ENCODE measurements at regions of chr19 and their contacts with region 1.

Region 1: GRCh38 chr19:2034729-2035589 is 16.1 kb downstream of the MKNK2 start:
- DNase-seq: peak; percentile 99
- ATAC-seq: peak; percentile 91
- H3K4me3 Mint-ChIP-seq: peak overlapping the region; percentile 54
- H3K27ac Mint-ChIP-seq: peak overlapping the region; percentile 96
- H3K4me1 Mint-ChIP-seq: peaks cover 17% of the 10 kb centered on the region
- H3K27me3 Mint-ChIP-seq: peaks cover 2% of the 10 kb centered on the region; the same call in 1 of the 2 replicates
- CTCF ChIP-seq: no peak

Region 2: GRCh38 chr19:1812469-1813196 is 222.3 kb before region 1 on chr19:
- CTCF ChIA-PET with region 1: no interaction called
- POLR2A ChIA-PET with region 1: no interaction called
- DNase-seq: peak; percentile 97
- ATAC-seq: peak; percentile 88
- H3K4me3 Mint-ChIP-seq: peak overlapping the region; percentile 87
- H3K27ac Mint-ChIP-seq: peak overlapping the region; percentile 95
- H3K4me1 Mint-ChIP-seq: peaks cover 5% of the 10 kb centered on the region; the same call in 1 of the 2 replicates
- H3K27me3 Mint-ChIP-seq: peaks cover 4% of the 10 kb centered on the region
- CTCF ChIP-seq: peak; percentile 43; the same call in 1 of the 2 replicates

Region 3: DNA sequence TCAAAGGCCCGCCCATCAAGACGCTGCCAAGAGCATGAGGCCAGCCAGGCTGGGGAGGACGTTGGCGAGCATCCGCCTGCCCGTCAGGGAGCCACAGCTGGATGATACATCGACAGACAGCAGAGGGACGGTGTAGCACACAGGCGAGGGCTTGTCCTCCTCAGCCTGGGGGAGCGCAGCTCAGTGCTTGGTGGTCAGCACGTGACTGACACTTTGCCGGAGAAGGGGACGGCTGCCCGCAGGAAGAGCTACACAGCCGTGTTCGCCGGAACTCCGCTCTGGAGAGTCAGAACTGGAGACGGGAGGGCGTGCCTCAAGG is 59.8 kb before region 1 on chr19:
- CTCF ChIA-PET with region 1: no interaction called
- POLR2A ChIA-PET with region 1: no interaction called
- DNase-seq: no peak
- ATAC-seq: no peak
- H3K4me3 Mint-ChIP-seq: no peak overlapping the region
- H3K27ac Mint-ChIP-seq: peak overlapping the region; percentile 69
- H3K4me1 Mint-ChIP-seq: no peaks in the 10 kb centered on the region
- H3K27me3 Mint-ChIP-seq: no peaks in the 10 kb centered on the region
- CTCF ChIP-seq: no peak

Region 4: DNA sequence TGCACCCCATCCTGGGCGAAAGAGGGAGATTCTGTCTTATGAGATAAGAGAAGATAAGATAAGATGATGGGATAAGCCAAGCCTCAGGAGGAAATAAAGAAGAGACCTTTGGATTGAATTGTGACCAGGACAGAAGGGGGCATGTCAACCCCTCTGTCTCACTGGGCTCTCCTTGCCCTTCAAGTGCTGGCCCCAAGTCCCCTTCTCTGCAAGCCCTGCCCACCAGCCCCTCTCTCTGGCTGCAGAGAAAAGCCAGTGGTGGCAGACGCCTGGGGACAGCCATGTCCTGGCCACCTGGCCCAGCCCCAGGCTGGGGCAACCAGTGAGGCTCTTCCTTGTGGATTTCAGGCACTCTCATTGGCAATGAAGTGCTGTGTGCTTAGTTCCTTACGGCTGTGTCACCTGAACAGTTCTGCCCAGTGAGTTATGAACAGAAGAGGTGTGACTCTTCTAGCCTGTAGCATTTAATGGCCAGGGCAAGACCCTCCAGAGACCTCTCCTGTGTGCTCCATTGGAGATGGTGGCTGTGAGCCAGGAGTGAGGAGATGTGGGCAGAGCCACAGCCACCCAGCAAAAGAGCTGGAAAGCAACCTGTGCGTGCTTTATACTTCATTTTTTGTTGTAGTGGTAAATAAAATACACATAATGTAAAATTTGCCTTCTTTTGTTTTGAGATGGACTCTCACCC is 13.4 kb before region 1 on chr19:
- CTCF ChIA-PET with region 1: interaction called, 14 read pairs
- POLR2A ChIA-PET with region 1: interaction called, 11 read pairs
- DNase-seq: no peak
- ATAC-seq: no peak
- H3K4me3 Mint-ChIP-seq: no peak overlapping the region
- H3K27ac Mint-ChIP-seq: no peak overlapping the region
- H3K4me1 Mint-ChIP-seq: no peaks in the 10 kb centered on the region
- H3K27me3 Mint-ChIP-seq: peaks cover 17% of the 10 kb centered on the region
- CTCF ChIP-seq: no peak

Region 5: DNA sequence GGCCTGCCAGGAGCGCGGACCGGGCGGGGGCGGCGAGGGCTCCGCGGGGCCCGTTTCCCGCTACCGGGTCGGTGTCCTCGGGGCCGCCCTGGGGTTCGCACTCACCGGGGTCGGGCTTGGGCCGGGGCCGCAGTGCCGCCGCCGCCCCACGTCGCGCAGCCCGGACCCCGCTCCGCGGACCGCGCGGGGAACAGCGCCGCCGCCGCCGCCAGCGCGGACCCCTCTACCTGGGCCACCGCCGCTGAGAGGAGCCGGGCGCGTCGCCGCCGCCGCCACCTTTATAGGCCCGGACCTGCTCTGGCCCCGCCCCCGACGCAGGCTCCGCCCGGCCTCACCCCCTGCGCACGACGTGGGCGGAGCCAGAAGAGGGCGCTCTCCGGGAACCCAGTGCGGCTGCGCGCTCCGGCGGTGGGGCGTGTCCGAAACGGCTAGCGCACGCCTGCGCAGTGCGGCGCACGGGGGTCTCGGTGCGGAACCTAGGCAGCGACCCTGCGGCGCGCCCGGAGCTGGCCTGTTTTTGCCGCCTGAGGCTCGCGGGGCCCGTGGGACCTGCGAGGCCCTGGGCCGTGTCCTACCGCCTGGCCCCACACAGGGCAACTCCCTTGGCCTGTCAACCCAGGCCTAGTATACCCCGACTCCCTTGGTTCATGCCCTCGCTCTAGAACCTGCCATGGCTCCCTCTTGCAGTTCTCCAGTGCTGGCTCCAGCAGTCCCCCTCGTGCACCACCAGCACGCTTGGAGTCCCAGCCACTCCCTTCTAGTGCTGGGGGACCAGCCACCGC is 16.2 kb after region 1 on chr19 and contains the start of gene MKNK2:
- CTCF ChIA-PET with region 1: interaction called, 12 read pairs
- POLR2A ChIA-PET with region 1: interaction called, 17 read pairs
- DNase-seq: peak; percentile 93
- ATAC-seq: peak; percentile 87
- H3K4me3 Mint-ChIP-seq: peak within 1 kb of the TSS; percentile 70
- H3K27ac Mint-ChIP-seq: peak within 1 kb of the TSS; percentile 92
- H3K4me1 Mint-ChIP-seq: peaks cover 11% of the 10 kb centered on the region
- H3K27me3 Mint-ChIP-seq: no peaks in the 10 kb centered on the region
- CTCF ChIP-seq: peak; percentile 56
- total RNA-seq, gene MKNK2: 150 to 165 TPM (median 163 TPM) in 3 replicates

Region 6: DNA sequence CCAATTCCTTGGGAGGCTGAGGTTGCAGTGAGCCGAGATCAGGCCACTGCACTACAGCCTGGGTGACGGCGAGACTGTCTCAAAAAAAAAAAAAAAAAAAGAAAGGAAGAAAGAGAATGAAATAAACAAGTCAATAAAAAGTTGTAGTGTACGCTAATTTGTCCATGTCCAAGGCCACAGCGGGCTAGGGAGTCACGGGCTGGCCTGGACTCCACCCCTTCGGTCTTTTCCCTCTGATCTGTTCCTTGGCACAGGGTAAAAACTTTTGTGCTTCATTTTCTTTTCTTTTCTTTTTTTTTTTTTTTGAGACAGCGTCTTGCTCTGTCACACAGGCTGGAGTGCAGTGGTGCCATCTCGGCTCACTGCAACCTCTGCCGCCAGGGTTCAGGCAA is 35.5 kb after region 1 on chr19:
- CTCF ChIA-PET with region 1: interaction called, 12 read pairs
- POLR2A ChIA-PET with region 1: interaction called, 3 read pairs
- DNase-seq: no peak
- ATAC-seq: no peak
- H3K4me3 Mint-ChIP-seq: no peak overlapping the region
- H3K27ac Mint-ChIP-seq: no peak overlapping the region
- H3K4me1 Mint-ChIP-seq: 0 out of 2 replicates have a peak, but pooled peaks cover 2% of the 10 kb centered on the region
- H3K27me3 Mint-ChIP-seq: no peaks in the 10 kb centered on the region; the same call in 1 of the 2 replicates
- CTCF ChIP-seq: no peak

Region 7: GRCh38 chr19:2127758-2128157 is 92.8 kb after region 1 on chr19:
- CTCF ChIA-PET with region 1: no interaction called
- POLR2A ChIA-PET with region 1: no interaction called
- DNase-seq: no peak
- ATAC-seq: no peak
- H3K4me3 Mint-ChIP-seq: no peak overlapping the region
- H3K27ac Mint-ChIP-seq: no peak overlapping the region
- H3K4me1 Mint-ChIP-seq: no peaks in the 10 kb centered on the region
- H3K27me3 Mint-ChIP-seq: no peaks in the 10 kb centered on the region
- CTCF ChIP-seq: no peak

Region 8: GRCh38 chr19:2161688-2162053 is 126.7 kb after region 1 on chr19:
- CTCF ChIA-PET with region 1: no interaction called
- POLR2A ChIA-PET with region 1: no interaction called
- DNase-seq: no peak
- ATAC-seq: no peak
- H3K4me3 Mint-ChIP-seq: no peak overlapping the region
- H3K27ac Mint-ChIP-seq: no peak overlapping the region
- H3K4me1 Mint-ChIP-seq: peaks cover 5% of the 10 kb centered on the region; the same call in 1 of the 2 replicates
- H3K27me3 Mint-ChIP-seq: no peaks in the 10 kb centered on the region
- CTCF ChIP-seq: no peak

Measured in WTC11 (cell line).